ENCODE measurements at regions of chr2 and their contacts with region 1.

Region 1: GRCh38 chr2:196783431-196784094 is 15.9 kb downstream of the GTF3C3 start:
- DNase-seq: peak in 2 of 10 donors; percentile 16 to 57
- H3K4me3 ChIP-seq: no peak overlapping the region
- H3K27ac ChIP-seq: peak overlapping the region in 1 of 59 donors; percentile 2
- H3K27me3 ChIP-seq: no peaks in the 10 kb centered on the region
- CTCF ChIP-seq: no peak

Region 2: GRCh38 chr2:196068271-196069209 is 715.0 kb before region 1 on chr2 and contains the start of gene DNAH7:
- intact Hi-C with region 1: no loop called
- DNase-seq: peak; percentile 76 to 93 (median 88)
- H3K4me3 ChIP-seq: peak within 1 kb of the TSS; percentile 59 to 96 (median 86)
- H3K27ac ChIP-seq: peak within 1 kb of the TSS in 48 of 59 donors; percentile 2 to 86 (median 60)
- H3K27me3 ChIP-seq: no peaks in the 10 kb centered on the region
- CTCF ChIP-seq: peak in 45 of 56 donors; percentile 6 to 93 (median 68)
- total RNA-seq, gene DNAH7: 4.6 to 43.3 (median 15.6) TPM

Region 3: DNA sequence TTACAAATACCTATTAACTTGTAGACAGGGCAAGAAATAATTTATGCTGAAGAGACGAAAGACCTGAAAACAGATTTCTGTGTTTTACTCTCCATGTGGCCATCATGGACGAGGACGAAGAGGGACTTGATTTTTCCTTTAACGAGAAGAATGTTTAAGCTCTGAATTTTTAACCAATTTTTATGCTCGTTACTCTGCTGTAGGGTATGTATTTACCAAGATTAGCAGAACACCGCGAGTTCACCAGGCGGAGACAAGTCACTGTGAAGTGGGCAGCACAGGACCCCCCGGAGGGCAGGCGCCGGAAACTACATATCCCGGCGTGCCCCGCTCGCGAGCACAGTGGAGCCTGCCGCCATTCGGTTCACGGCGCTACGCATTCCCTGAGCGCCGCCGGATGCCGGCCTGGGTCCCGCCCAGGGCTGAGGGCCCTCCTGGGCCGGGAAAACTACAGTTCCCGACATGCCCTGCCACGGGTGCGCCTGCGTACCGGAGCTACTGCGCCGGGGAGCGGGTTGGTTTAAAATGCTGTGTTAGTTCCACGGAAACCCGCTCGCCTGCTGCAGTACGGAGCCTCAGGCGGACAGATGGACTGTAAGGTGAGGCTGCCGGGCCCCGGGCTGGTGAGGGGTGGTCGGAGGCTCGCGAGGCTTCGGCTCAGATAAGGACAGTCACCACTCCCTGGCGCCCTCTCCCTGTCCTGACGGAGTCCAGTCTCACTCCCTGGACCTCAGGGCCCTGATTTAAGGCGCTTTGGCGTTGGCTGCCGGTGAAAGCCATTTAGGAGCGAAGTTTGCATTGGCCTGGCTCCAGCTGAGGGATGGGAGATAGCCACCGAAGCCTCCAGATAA is 144.2 kb before region 1 on chr2 and contains the start of gene CCDC150:
- intact Hi-C with region 1: no loop called
- DNase-seq: peak; percentile 87 to 97 (median 94)
- H3K4me3 ChIP-seq: peak within 1 kb of the TSS; percentile 34 to 89 (median 74)
- H3K27ac ChIP-seq: peak within 1 kb of the TSS in 36 of 59 donors; percentile 4 to 73 (median 46)
- H3K27me3 ChIP-seq: no peaks in the 10 kb centered on the region
- CTCF ChIP-seq: peak in 51 of 56 donors; percentile 24 to 71 (median 52)
- total RNA-seq, gene CCDC150: 0.67 to 10.5 (median 4.1) TPM

Region 4: DNA sequence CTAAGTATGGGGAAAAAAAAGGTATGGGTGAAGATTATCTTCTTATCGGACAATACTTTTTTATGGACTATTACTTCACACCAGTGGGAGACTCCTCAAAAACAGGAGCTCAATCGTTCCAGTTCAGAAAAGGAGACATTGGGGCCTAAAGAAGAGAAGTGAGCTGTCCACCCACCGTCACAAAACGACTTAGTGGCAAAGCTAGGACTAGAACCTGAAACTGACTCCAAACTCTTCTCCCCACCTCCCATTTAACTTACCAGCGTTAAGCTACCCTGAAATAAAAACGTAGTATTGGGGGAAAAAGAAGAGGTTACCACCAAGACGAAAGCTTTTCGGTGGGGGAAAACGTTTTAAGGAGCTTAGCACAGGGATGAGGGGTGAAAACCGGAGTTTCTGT is 15.4 kb after region 1 on chr2:
- intact Hi-C with region 1: loop called in 1 of 2 experiments (anchors 1 kb)
- DNase-seq: no peak
- H3K4me3 ChIP-seq: peak overlapping the region; percentile 34 to 93 (median 81)
- H3K27ac ChIP-seq: peak overlapping the region in 57 of 59 donors; percentile 13 to 93 (median 83)
- H3K27me3 ChIP-seq: no peaks in the 10 kb centered on the region
- CTCF ChIP-seq: no peak

Measured in dorsolateral prefrontal cortex (tissue), 120 donors.